Sigmoid colon (tissue), 7 donors: ENCODE measurements at regions of chr2 and their contacts with region 1.

Region 1: GRCh38 chr2:41853427-41854216 is 194.2 kb upstream of the PKDCC start:
- DNase-seq: no peak
- H3K4me3 ChIP-seq: no peak overlapping the region
- H3K27ac ChIP-seq: no peak overlapping the region
- H3K4me1 ChIP-seq: no peaks in the 10 kb centered on the region
- H3K27me3 ChIP-seq: peaks cover 0 to 6% (median 0%) of the 10 kb centered on the region in 3 donors
- CTCF ChIP-seq: peak; percentile 19 to 71 (median 68)
- EP300 ChIP-seq: no peak
- POLR2A ChIP-seq: no peak

Region 2: GRCh38 chr2:42086500-42086953 is 232.9 kb after region 1 on chr2:
- intact Hi-C with region 1: loop called (anchors 5 kb)
- DNase-seq: no peak
- H3K4me3 ChIP-seq: no peak overlapping the region
- H3K27ac ChIP-seq: no peak overlapping the region
- H3K4me1 ChIP-seq: peaks cover 0 to 29% (median 27%) of the 10 kb centered on the region in 4 donors
- H3K27me3 ChIP-seq: no peaks in the 10 kb centered on the region
- CTCF ChIP-seq: peak; percentile 76 to 89 (median 80)
- EP300 ChIP-seq: no peak
- POLR2A ChIP-seq: no peak

Region 3: DNA sequence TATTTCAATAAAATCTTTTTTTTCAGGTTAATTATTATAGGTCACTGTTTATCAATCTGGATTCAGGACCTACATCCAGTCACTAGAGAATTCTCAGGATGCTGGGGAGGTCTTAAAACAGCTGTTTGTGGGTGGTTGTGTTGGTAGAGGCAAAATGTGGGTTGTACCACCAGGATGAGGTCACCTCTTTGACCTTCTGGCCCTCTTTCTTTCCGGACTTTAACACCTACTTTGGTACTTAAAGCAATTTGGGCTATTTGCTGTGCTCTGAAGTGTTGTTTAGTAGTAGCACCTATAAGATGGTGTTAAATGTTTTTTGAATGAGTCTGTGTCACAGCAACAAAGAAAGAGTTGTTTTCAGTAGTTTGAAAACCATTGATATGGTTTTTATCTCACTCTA is 330.2 kb after region 1 on chr2:
- intact Hi-C with region 1: no loop called
- DNase-seq: no peak
- H3K4me3 ChIP-seq: no peak overlapping the region
- H3K27ac ChIP-seq: no peak overlapping the region
- H3K4me1 ChIP-seq: peaks cover 0 to 26% (median 12%) of the 10 kb centered on the region in 4 donors
- H3K27me3 ChIP-seq: no peaks in the 10 kb centered on the region
- CTCF ChIP-seq: no peak
- EP300 ChIP-seq: no peak
- POLR2A ChIP-seq: no peak

Region 4: DNA sequence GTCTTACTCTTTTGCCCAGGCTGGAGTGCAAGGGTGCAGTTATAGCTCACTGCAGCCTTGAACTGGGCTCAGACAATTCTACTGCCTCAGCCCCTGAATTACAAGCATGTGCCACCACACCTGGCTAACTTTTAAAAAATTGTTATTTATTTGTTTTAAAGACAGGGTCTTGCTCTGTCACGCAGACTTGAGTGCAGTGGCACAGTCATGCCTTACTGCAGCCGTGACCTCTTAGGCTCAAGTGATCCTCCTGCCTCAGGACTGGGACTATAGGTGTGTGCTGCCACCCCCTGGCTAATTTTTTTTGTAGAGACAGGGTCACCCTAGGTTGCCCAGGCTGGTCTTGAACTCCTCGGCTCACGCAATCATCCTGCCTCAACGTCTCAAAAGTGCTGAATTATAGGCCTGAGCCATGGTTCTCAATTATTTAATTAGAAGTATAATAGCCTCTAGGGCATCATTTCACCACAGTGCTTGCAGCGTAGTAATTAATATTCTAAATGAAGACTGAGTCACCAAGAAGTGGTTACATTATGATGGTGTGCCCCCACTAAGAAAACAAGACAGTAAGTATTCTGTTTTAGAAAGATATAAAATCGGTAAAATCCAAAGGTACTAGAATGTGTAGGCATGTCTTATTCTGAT is 385.1 kb after region 1 on chr2:
- intact Hi-C with region 1: loop called (anchors 10 kb)
- DNase-seq: no peak
- H3K4me3 ChIP-seq: no peak overlapping the region
- H3K27ac ChIP-seq: no peak overlapping the region
- H3K4me1 ChIP-seq: peaks cover 0 to 12% (median 4%) of the 10 kb centered on the region in 4 donors
- H3K27me3 ChIP-seq: no peaks in the 10 kb centered on the region
- CTCF ChIP-seq: peak; percentile 14 to 49 (median 33)
- EP300 ChIP-seq: no peak
- POLR2A ChIP-seq: no peak